ENCODE measurements at regions of chr9 and their contacts with region 1.

Region 1: DNA sequence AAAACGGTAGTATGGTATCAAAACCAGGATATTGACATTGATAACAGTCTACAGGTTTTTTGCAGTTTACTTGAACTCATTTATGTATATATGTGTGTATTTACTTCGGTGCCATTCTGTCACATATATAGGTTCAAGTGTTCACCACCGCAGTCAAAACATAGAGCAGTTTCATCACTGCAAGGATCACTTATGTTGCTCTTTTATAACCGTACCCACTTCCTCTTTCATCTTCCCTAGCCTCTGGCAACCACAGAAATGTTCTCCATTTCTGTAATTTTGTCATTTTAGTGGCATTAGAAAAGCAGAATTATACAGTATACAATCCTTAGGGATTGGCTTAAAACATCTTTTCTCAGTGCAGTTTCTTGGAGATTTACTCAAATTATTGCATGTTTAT is 90.3 kb downstream of the SH3GL2 start:
- DNase-seq: no peak
- ATAC-seq: no peak
- H3K4me3 ChIP-seq: no peak overlapping the region
- H3K4me3 Mint-ChIP-seq: no peak overlapping the region
- H3K27ac ChIP-seq: no peak overlapping the region
- H3K27ac Mint-ChIP-seq: no peak overlapping the region
- H3K4me1 ChIP-seq: no peaks in the 10 kb centered on the region
- H3K4me1 Mint-ChIP-seq: no peaks in the 10 kb centered on the region
- H3K27me3 ChIP-seq: no peaks in the 10 kb centered on the region
- H3K27me3 Mint-ChIP-seq: no peaks in the 10 kb centered on the region

Region 2: DNA sequence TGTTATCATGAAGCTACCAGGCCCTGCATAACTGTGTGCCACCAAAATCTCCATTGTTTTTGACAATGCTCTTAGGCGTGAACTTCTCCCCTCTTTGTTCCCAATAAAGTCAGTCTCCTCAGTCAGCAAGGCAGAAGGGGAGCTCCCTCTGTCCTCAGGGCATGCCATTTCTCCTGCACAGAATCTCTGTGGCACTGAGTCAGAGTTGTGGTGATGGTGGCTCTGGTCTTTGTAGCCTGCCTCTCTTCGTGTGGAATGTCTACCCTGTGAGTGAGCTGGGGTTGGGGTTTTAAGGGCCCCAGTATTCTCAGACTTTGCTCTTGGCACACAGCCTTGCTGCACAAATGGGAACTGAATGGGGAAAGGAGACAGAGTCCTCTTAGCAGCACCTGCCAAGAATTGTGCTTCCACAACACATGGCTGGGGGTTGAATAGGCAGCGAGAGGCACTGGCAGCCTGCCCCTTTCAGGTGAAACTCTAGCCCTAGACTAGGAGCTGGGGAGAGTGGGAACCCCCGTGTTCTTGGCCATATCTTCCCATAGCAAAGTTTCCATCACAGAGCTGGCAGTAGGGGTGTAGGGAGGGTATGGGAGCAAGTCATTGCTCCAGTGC is 56.3 kb after region 1 on chr9:
- CTCF ChIA-PET with region 1: no interaction called
- POLR2A ChIA-PET with region 1: no interaction called
- intact Hi-C with region 1: loop called in 1 of 2 experiments (anchors 10 kb)
- DNase-seq: no peak
- ATAC-seq: no peak
- H3K4me3 ChIP-seq: no peak overlapping the region
- H3K4me3 Mint-ChIP-seq: no peak overlapping the region
- H3K27ac ChIP-seq: no peak overlapping the region
- H3K27ac Mint-ChIP-seq: no peak overlapping the region
- H3K4me1 ChIP-seq: no peaks in the 10 kb centered on the region
- H3K4me1 Mint-ChIP-seq: peaks cover 0 to 4% (median 0%) of the 10 kb centered on the region in 7 donors
- H3K27me3 ChIP-seq: no peaks in the 10 kb centered on the region
- H3K27me3 Mint-ChIP-seq: no peaks in the 10 kb centered on the region